ENCODE measurements at regions of chr19 and their contacts with region 1.

Region 1: GRCh38 chr19:7953060-7953459 is 9.6 kb upstream of the TIMM44 start:
- DNase-seq: no peak
- ATAC-seq: no peak

Region 2: DNA sequence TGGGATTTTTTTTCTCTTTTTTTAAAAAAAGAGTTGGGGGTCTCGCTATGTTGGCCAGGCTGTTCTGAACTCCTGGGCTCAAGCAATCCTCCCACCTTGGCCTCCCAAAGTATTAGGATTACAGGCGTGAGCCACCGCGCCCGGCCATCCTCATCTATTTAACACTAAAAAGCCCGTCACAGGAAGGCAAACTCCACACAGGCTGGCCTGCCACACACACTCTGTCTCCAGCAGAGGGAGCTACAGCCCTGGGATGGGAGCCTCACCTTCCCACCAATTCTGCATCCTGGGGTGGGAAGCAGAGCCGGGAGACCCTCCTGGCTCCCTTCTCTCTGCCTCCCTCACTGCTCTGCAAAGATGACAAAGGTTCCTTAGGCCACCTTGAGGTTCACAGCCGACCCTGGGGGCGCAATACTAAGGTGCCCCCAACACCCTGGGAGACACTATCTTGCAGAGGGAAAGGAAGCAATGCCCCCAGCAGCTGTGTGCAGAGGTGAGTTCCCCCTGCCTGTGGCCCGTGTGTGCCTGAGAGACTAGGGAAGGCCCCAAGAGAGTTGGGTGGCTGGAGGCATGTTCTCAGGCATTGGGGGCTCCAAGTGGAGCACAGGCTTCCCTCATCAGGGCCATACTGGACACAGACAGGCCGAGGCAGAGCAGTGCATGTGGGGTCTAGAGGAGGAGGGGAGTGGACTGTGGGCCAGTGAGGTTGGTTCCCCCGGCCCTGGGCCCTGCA is 17.8 kb after region 1 on chr19:
- intact Hi-C with region 1: loop called (anchors 1 kb)
- DNase-seq: no peak
- ATAC-seq: no peak

Measured in Right ventricle myocardium inferior (tissue), 1 donor.